Natural killer cell (primary cell): ENCODE measurements at regions of chr6 and their contacts with region 1.

Region 1: GRCh38 chr6:132813173-132813856 is 1.1 kb upstream of the RPS12 start:
- DNase-seq: peak; percentile 29 to 79
- ATAC-seq: peak; percentile 16 to 40 (median 21)
- H3K4me3 ChIP-seq: peak overlapping the region; percentile 83
- H3K4me3 Mint-ChIP-seq: peak overlapping the region; percentile 99
- H3K27ac ChIP-seq: peak overlapping the region; percentile 88
- H3K27ac Mint-ChIP-seq: peak overlapping the region; percentile 93 to 96
- H3K4me1 ChIP-seq: peaks cover 15% of the 10 kb centered on the region
- H3K4me1 Mint-ChIP-seq: peaks cover 54 to 58% of the 10 kb centered on the region in 2 donors
- H3K27me3 ChIP-seq: no peaks in the 10 kb centered on the region
- H3K27me3 Mint-ChIP-seq: peaks cover 3 to 16% of the 10 kb centered on the region in 2 donors
- CTCF ChIP-seq: no peak

Region 2: GRCh38 chr6:132512638-132513632 is 300.4 kb before region 1 on chr6 and contains the start of gene STX7:
- intact Hi-C with region 1: loop called (anchors 5 kb)
- DNase-seq: peak; percentile 79 to 92
- ATAC-seq: peak; percentile 92 to 96 (median 95)
- H3K4me3 ChIP-seq: peak within 1 kb of the TSS; percentile 76
- H3K4me3 Mint-ChIP-seq: peak within 1 kb of the TSS; percentile 99
- H3K27ac ChIP-seq: peak within 1 kb of the TSS; percentile 66
- H3K27ac Mint-ChIP-seq: peak within 1 kb of the TSS; percentile 83 to 86
- H3K4me1 ChIP-seq: peaks cover 6% of the 10 kb centered on the region
- H3K4me1 Mint-ChIP-seq: peaks cover 38 to 50% of the 10 kb centered on the region in 2 donors
- H3K27me3 ChIP-seq: no peaks in the 10 kb centered on the region
- H3K27me3 Mint-ChIP-seq: peaks cover 8% of the 10 kb centered on the region in 2 donors
- CTCF ChIP-seq: no peak
- total RNA-seq, gene STX7: 37.3 to 49.9 (median 39.5) TPM

Region 3: GRCh38 chr6:132614554-132614953 is 198.8 kb before region 1 on chr6:
- intact Hi-C with region 1: loop called (anchors 5 kb)
- DNase-seq: peak in 1 of 2 donors; percentile 14
- ATAC-seq: peak; percentile 26 to 50 (median 42)
- H3K4me3 ChIP-seq: peak overlapping the region; percentile 8
- H3K4me3 Mint-ChIP-seq: peak overlapping the region; percentile 88
- H3K27ac ChIP-seq: peak overlapping the region; percentile 1
- H3K27ac Mint-ChIP-seq: peak overlapping the region; percentile 76 to 85
- H3K4me1 ChIP-seq: no peaks in the 10 kb centered on the region
- H3K4me1 Mint-ChIP-seq: peaks cover 23 to 37% of the 10 kb centered on the region in 2 donors
- H3K27me3 ChIP-seq: no peaks in the 10 kb centered on the region
- H3K27me3 Mint-ChIP-seq: no peaks in the 10 kb centered on the region
- CTCF ChIP-seq: no peak

Region 4: DNA sequence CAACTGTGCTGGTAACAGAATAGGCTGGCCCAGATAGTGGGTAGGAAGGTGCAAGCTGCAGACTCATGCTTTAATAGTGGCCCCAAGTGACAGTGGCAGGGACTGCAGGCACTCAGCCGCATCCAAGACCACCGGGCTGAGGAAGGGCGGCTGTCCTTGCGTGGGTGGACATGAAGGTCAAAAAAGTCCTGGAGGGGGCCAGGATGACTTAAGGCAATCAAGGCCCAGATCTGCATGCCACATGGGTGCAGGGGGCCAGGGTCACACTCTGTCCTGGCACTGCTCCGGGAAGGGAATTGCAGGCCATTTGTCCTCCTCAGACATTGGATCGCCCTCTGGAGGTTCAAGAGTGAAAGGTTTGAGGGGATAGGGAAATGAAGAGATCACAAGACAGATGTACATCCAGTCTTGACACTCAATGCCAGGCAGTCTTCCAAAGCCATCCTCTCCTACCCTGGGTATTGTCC is 45.2 kb before region 1 on chr6:
- intact Hi-C with region 1: loop called (anchors 5 kb)
- DNase-seq: peak; percentile 21 to 38
- ATAC-seq: peak; percentile 70 to 84 (median 84)
- H3K4me3 ChIP-seq: no peak overlapping the region
- H3K4me3 Mint-ChIP-seq: no peak overlapping the region
- H3K27ac ChIP-seq: no peak overlapping the region
- H3K27ac Mint-ChIP-seq: no peak overlapping the region
- H3K4me1 ChIP-seq: peaks cover 16% of the 10 kb centered on the region
- H3K4me1 Mint-ChIP-seq: peaks cover 14 to 17% of the 10 kb centered on the region in 2 donors
- H3K27me3 ChIP-seq: no peaks in the 10 kb centered on the region
- H3K27me3 Mint-ChIP-seq: peaks cover 0 to 2% of the 10 kb centered on the region in 2 donors
- CTCF ChIP-seq: peak; percentile 48

Region 5: GRCh38 chr6:132798869-132799538 is 14.3 kb before region 1 on chr6:
- intact Hi-C with region 1: loop called (anchors 1 kb)
- DNase-seq: peak; percentile 36 to 86
- ATAC-seq: peak; percentile 86
- H3K4me3 ChIP-seq: peak overlapping the region; percentile 82
- H3K4me3 Mint-ChIP-seq: no peak overlapping the region
- H3K27ac ChIP-seq: peak overlapping the region; percentile 70
- H3K27ac Mint-ChIP-seq: no peak overlapping the region
- H3K4me1 ChIP-seq: no peaks in the 10 kb centered on the region
- H3K4me1 Mint-ChIP-seq: peaks cover 10 to 16% of the 10 kb centered on the region in 2 donors
- H3K27me3 ChIP-seq: peaks cover 2% of the 10 kb centered on the region
- H3K27me3 Mint-ChIP-seq: peaks cover 0 to 2% of the 10 kb centered on the region in 2 donors
- CTCF ChIP-seq: peak; percentile 72

Region 6: GRCh38 chr6:133595111-133595761 is 781.9 kb after region 1 on chr6:
- intact Hi-C with region 1: no loop called
- DNase-seq: no peak
- ATAC-seq: no peak
- H3K4me3 ChIP-seq: no peak overlapping the region
- H3K4me3 Mint-ChIP-seq: no peak overlapping the region
- H3K27ac ChIP-seq: no peak overlapping the region
- H3K27ac Mint-ChIP-seq: no peak overlapping the region
- H3K4me1 ChIP-seq: no peaks in the 10 kb centered on the region
- H3K4me1 Mint-ChIP-seq: no peaks in the 10 kb centered on the region
- H3K27me3 ChIP-seq: no peaks in the 10 kb centered on the region
- H3K27me3 Mint-ChIP-seq: no peaks in the 10 kb centered on the region
- CTCF ChIP-seq: no peak

Region 7: DNA sequence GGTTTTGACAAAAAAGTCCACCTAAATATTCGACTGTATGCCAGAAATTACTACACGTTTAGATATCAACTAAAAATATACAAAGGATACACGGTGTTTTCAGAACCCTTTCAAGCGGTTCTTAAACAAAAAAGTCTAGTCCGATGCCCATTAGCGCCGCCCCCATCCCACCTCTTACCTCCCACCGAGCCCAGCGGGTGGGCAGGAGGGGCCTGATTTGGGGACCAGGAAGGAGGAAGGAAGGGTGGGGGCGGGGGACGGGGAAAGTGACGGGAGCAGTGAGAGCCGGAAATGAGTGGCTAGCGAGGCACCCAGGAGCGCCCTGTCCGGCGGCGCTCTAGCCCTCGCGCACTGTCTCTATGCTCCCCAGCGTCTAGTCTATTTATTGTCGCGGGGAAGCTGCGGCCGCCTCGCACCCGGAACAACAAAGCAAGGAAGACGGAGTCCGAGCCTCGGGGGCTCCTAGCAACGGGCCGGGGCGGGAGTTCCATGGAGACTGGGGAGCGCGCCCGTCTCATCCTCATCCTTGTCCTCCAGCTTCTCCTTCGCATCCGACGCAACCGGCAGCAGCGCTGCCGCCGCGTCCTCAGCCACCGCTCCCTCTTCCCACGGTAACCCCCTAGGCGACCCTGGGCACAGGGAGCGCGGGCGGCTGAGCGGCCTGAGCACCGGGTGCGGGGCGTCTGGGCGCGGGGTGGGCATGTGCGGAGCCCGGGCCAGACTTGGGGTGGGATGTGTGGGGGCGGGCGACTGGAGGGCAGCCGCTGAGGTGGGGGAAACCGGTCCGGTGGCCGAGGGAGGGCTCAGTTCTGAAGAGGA is 1139.7 kb after region 1 on chr6 and contains the start of gene TBPL1:
- intact Hi-C with region 1: loop called (anchors 5 kb)
- DNase-seq: peak; percentile 77 to 96
- ATAC-seq: peak; percentile 83 to 96 (median 91)
- H3K4me3 ChIP-seq: peak within 1 kb of the TSS; percentile 69
- H3K4me3 Mint-ChIP-seq: peak within 1 kb of the TSS; percentile 97
- H3K27ac ChIP-seq: peak within 1 kb of the TSS; percentile 73
- H3K27ac Mint-ChIP-seq: peak within 1 kb of the TSS; percentile 94 to 95
- H3K4me1 ChIP-seq: peaks cover 8% of the 10 kb centered on the region
- H3K4me1 Mint-ChIP-seq: peaks cover 52 to 60% of the 10 kb centered on the region in 2 donors
- H3K27me3 ChIP-seq: no peaks in the 10 kb centered on the region
- H3K27me3 Mint-ChIP-seq: no peaks in the 10 kb centered on the region
- CTCF ChIP-seq: no peak
- total RNA-seq, gene TBPL1: 54.8 to 71.0 (median 59.9) TPM